Caco-2 (cell line): ENCODE measurements at regions of chr15 and their contacts with region 1.

Region 1: GRCh38 chr15:50908210-50909009 is at the start of gene AP4E1:
- DNase-seq: peak; percentile 88 to 93
- H3K4me3 ChIP-seq: peak within 1 kb of the TSS; percentile 73
- H3K4me3 Mint-ChIP-seq: peak within 1 kb of the TSS; percentile 83
- H3K27ac Mint-ChIP-seq: peak within 1 kb of the TSS; percentile 81
- H3K4me1 ChIP-seq: peaks cover 33% of the 10 kb centered on the region
- H3K4me1 Mint-ChIP-seq: peaks cover 6% of the 10 kb centered on the region
- H3K27me3 ChIP-seq: no peaks in the 10 kb centered on the region
- H3K27me3 Mint-ChIP-seq: no peaks in the 10 kb centered on the region
- CTCF ChIP-seq: peak; percentile 89 to 94
- total RNA-seq, gene AP4E1: 15.9 and 17.9 TPM in 2 replicates

Region 2: DNA sequence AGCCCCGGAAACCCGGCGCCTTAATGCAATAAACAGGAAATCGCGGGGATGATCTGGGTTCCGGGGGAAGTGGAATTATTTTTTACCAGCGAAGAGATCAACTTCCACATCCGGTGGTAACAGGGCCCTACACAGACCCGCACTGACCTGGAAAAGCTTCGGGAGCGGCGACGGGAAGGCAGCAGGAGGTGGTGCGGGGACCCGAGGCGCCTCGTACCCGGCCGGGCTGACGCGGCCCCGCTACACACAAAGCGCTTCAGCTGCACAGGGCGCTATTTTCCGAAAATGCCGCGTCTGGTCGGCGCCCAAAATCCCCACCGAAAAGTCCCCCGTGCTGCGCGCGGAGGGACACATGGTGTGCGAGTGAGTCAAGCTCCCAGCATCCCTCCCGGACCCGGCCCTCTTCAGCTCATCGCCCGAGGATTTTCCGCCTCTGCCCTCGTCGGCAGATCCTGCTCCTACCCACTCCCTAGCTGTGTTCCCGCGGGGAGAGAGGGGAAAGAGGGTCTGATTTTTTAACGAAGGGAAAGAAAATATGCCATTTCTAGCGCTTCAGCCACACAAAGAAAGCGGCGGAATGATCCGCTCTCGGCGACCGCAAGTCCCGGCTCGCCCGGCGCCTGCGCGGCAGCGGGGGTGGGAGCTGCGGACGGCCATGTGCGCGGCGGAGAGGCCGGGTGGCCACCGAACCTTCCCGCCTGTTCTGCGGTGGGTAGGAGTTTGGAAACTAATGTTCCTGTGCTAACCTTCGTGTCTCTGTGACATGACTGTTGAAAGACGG is 553.4 kb before region 1 on chr15 and contains the start of gene GABPB1:
- CTCF ChIA-PET with region 1: no interaction called
- POLR2A ChIA-PET with region 1: interaction called, 3 read pairs
- intact Hi-C with region 1: loop called (anchors 2 kb)
- DNase-seq: peak; percentile 86 to 91
- H3K4me3 ChIP-seq: peak within 1 kb of the TSS; percentile 91
- H3K4me3 Mint-ChIP-seq: peak within 1 kb of the TSS; percentile 93
- H3K27ac Mint-ChIP-seq: peak within 1 kb of the TSS; percentile 97
- H3K4me1 ChIP-seq: peaks cover 16% of the 10 kb centered on the region
- H3K4me1 Mint-ChIP-seq: peaks cover 28% of the 10 kb centered on the region
- H3K27me3 ChIP-seq: no peaks in the 10 kb centered on the region
- H3K27me3 Mint-ChIP-seq: no peaks in the 10 kb centered on the region
- CTCF ChIP-seq: no peak
- total RNA-seq, gene GABPB1: 42.8 and 44.7 TPM in 2 replicates

Region 3: GRCh38 chr15:50424066-50424890 is 484.1 kb before region 1 on chr15 and contains the start of gene USP8:
- CTCF ChIA-PET with region 1: no interaction called
- POLR2A ChIA-PET with region 1: no interaction called
- intact Hi-C with region 1: loop called (anchors 10 kb)
- DNase-seq: peak; percentile 98 to 99
- H3K4me3 ChIP-seq: peak within 1 kb of the TSS; percentile 65
- H3K4me3 Mint-ChIP-seq: peak within 1 kb of the TSS; percentile 98
- H3K27ac Mint-ChIP-seq: peak within 1 kb of the TSS; percentile 97
- H3K4me1 ChIP-seq: 0 out of 2 replicates have a peak, but pooled peaks cover 4% of the 10 kb centered on the region
- H3K4me1 Mint-ChIP-seq: no peaks in the 10 kb centered on the region
- H3K27me3 ChIP-seq: no peaks in the 10 kb centered on the region
- H3K27me3 Mint-ChIP-seq: no peaks in the 10 kb centered on the region
- CTCF ChIP-seq: no peak
- total RNA-seq, gene USP8: 46.7 and 56.2 TPM in 2 replicates

Region 4: GRCh38 chr15:50542887-50543210 is 365.6 kb before region 1 on chr15:
- CTCF ChIA-PET with region 1: no interaction called
- POLR2A ChIA-PET with region 1: no interaction called
- intact Hi-C with region 1: loop called (anchors 10 kb)
- DNase-seq: no peak
- H3K4me3 ChIP-seq: no peak overlapping the region
- H3K4me3 Mint-ChIP-seq: no peak overlapping the region
- H3K27ac Mint-ChIP-seq: no peak overlapping the region
- H3K4me1 ChIP-seq: no peaks in the 10 kb centered on the region
- H3K4me1 Mint-ChIP-seq: no peaks in the 10 kb centered on the region
- H3K27me3 ChIP-seq: no peaks in the 10 kb centered on the region
- H3K27me3 Mint-ChIP-seq: no peaks in the 10 kb centered on the region
- CTCF ChIP-seq: no peak

Region 5: GRCh38 chr15:50627351-50628055 is 280.9 kb before region 1 on chr15:
- CTCF ChIA-PET with region 1: no interaction called
- POLR2A ChIA-PET with region 1: no interaction called
- intact Hi-C with region 1: loop called (anchors 2 kb)
- DNase-seq: peak in 1 of 2 experiments; percentile 20
- H3K4me3 ChIP-seq: no peak overlapping the region
- H3K4me3 Mint-ChIP-seq: peak overlapping the region; percentile 13
- H3K27ac Mint-ChIP-seq: peak overlapping the region; percentile 55
- H3K4me1 ChIP-seq: peaks cover 43% of the 10 kb centered on the region
- H3K4me1 Mint-ChIP-seq: peaks cover 33% of the 10 kb centered on the region
- H3K27me3 ChIP-seq: no peaks in the 10 kb centered on the region
- H3K27me3 Mint-ChIP-seq: no peaks in the 10 kb centered on the region
- CTCF ChIP-seq: no peak

Region 6: DNA sequence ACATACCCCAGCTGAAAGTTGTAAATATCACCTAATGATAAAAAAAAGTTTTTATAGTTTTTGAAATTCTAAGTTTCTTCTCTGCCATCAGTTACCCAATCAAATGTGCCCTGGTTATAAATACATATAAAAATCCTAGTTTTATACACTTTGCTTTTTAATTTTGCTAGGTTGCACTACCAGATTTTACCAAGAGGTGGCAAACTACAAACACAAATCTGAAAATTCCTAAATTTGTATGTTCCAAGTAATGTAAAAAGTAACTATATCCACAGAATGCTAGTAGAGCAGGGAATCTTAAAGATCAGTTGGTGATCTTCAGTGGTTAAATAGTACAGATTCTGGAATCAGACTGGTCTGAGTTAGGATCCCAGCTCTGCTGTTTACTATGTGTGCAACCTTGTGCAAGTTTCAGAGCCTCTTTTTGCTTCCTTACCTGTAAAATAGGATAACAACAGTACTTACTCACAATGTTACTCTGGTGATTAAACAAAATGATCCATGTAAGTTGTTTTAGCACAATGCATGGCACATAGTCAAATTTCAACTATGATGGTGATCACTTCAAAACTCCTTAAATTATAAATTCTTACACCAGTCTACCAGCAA is 232.8 kb before region 1 on chr15:
- CTCF ChIA-PET with region 1: no interaction called
- POLR2A ChIA-PET with region 1: no interaction called
- intact Hi-C with region 1: loop called (anchors 1 kb)
- DNase-seq: peak in 1 of 2 experiments; percentile 25
- H3K4me3 ChIP-seq: no peak overlapping the region
- H3K4me3 Mint-ChIP-seq: no peak overlapping the region
- H3K27ac Mint-ChIP-seq: no peak overlapping the region
- H3K4me1 ChIP-seq: peaks cover 23% of the 10 kb centered on the region
- H3K4me1 Mint-ChIP-seq: peaks cover 14% of the 10 kb centered on the region
- H3K27me3 ChIP-seq: no peaks in the 10 kb centered on the region
- H3K27me3 Mint-ChIP-seq: no peaks in the 10 kb centered on the region
- CTCF ChIP-seq: peak; percentile 46 to 77

Region 7: DNA sequence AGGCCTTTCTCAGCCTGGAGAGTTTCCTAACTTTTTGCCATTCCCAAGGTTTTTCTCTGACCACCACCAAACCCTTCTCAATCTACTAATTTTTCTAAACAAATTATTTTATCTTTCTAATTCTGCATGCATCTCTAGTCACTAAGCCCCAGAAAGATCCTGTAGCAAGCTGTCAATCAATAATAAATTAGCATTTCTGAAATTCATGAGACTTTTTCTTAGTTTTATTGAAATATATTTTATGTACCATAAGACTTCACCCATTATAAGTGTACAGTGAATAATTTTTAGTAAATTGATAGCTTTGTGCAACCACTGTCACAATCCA is 22.3 kb before region 1 on chr15:
- CTCF ChIA-PET with region 1: no interaction called
- POLR2A ChIA-PET with region 1: no interaction called
- intact Hi-C with region 1: loop called (anchors 1 kb)
- DNase-seq: no peak
- H3K4me3 ChIP-seq: no peak overlapping the region
- H3K4me3 Mint-ChIP-seq: no peak overlapping the region
- H3K27ac Mint-ChIP-seq: peak overlapping the region; percentile 59
- H3K4me1 ChIP-seq: peaks cover 7% of the 10 kb centered on the region
- H3K4me1 Mint-ChIP-seq: peaks cover 14% of the 10 kb centered on the region
- H3K27me3 ChIP-seq: no peaks in the 10 kb centered on the region
- H3K27me3 Mint-ChIP-seq: no peaks in the 10 kb centered on the region
- CTCF ChIP-seq: no peak